CD8-positive, alpha-beta T cell (primary cell): ENCODE measurements at regions of chr2 and their contacts with region 1.

Region 1: DNA sequence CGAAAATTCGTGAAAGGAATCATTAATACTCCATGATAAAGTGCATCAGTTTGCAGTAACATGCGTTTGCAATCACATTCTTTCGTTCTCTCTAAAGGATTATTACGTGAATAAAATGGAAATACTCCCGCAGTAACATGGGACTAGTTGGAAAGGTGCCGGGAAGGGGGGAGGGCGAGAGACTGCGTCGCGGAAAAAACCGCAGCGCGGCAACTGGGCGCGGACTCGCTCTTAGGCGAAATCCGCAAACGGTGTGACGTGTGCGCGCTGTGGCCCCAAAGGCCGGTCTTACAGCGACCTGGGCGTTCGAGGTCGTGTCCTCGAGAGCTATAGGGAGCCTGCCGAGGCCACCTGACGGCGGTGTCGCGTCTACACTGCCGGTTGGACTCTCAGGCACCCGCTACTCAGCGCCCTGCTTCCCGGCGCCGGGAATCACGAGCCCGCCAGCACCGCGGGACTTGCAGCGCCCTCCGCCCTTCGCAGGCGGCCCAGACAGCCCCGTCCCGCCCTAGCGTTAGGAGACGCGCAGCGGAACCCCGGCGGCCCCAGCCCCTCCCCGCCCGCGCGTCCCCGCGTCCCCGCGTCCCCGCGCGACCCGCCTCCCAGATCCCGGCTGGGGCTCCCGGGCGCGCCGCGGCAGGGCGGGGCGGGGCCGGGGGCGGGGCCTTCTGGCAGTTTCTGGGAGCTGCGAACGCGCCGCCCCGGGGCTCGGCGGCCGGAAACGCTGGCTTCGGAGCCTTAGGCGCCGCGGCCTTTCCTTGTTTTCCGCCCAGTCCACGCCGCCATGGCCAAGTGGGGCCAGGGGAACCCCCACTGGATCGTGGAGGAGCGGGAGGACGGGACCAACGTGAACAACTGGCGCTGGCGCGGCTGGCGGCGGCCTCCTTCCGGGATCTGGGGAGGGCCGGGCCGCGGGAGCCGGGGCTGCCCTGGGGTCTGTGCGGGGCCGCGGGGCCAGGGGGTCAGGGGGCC is 15.1 kb downstream of the C2orf74 start:
- DNase-seq: peak; percentile 88 to 95 (median 94)
- ATAC-seq: peak; percentile 88
- H3K4me3 ChIP-seq: peak overlapping the region; percentile 74 to 87
- H3K4me3 Mint-ChIP-seq: peak overlapping the region; percentile 94
- H3K27ac ChIP-seq: peak overlapping the region; percentile 80 to 95
- H3K27ac Mint-ChIP-seq: peak overlapping the region; percentile 95
- H3K4me1 ChIP-seq: peaks cover 45% of the 10 kb centered on the region
- H3K4me1 Mint-ChIP-seq: peaks cover 52% of the 10 kb centered on the region
- H3K27me3 ChIP-seq: no peaks in the 10 kb centered on the region
- H3K27me3 Mint-ChIP-seq: no peaks in the 10 kb centered on the region
- CTCF ChIP-seq: no peak

Region 2: GRCh38 chr2:61016808-61017555 is 160.1 kb before region 1 on chr2:
- CTCF ChIA-PET with region 1: no interaction called
- POLR2A ChIA-PET with region 1: no interaction called
- intact Hi-C with region 1: loop called (anchors 1 kb)
- DNase-seq: peak; percentile 30 to 81 (median 67)
- ATAC-seq: peak; percentile 69
- H3K4me3 ChIP-seq: peak overlapping the region; percentile 80 to 99
- H3K4me3 Mint-ChIP-seq: peak overlapping the region; percentile 99
- H3K27ac ChIP-seq: peak overlapping the region; percentile 69 to 84
- H3K27ac Mint-ChIP-seq: peak overlapping the region; percentile 95
- H3K4me1 ChIP-seq: peaks cover 21% of the 10 kb centered on the region
- H3K4me1 Mint-ChIP-seq: peaks cover 46% of the 10 kb centered on the region
- H3K27me3 ChIP-seq: no peaks in the 10 kb centered on the region
- H3K27me3 Mint-ChIP-seq: no peaks in the 10 kb centered on the region
- CTCF ChIP-seq: no peak

Region 3: DNA sequence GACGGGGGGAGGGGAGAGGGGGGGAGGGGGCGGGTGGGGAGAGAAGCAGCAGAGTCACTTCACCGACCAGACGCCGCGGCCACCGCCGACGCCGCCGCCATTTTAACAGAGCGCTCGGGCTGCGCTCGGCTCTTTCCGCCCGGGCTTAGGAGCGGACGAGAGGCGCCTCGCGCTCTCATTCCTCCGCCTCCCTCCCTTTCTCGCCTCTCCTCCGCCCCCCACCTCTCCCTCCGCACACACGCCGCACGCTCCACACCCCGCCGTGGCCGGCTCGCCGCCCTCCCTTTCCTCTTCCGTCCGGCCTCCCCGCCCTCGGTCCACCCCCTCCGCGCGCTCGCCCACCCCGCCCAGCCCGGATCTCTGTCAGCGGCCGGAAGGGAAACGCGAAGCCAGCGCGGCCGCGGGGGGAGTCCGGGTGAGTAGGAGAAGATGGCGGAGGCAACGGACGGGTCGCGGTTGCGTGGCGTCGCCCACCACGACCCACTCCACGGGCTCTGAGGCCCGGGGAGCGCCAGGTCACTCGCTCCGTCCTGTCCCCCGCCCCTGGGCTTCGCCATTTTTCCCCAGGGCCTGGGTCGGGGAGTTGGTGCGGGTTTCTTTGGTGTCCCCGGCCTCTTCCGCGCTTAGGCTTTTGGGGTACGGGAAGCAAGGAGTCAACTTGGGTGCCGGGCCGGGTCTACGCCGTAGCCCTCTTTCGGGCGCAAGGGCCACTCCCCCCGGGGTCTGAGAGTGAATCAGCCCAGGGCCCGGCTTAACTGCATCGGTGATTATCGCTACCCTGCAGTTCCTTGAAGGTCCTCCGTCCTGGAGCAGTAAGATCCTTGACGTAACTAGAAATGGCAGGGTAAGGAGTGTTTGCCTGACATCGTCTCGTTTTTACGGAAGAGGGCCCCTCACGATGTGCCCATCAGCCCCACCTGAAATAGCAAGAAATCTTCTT is 294.2 kb after region 1 on chr2 and contains the start of gene USP34:
- CTCF ChIA-PET with region 1: no interaction called
- POLR2A ChIA-PET with region 1: no interaction called
- intact Hi-C with region 1: loop called (anchors 1 to 2 kb)
- DNase-seq: peak; percentile 90 to 98 (median 93)
- ATAC-seq: peak; percentile 85
- H3K4me3 ChIP-seq: peak within 1 kb of the TSS; percentile 77 to 99
- H3K4me3 Mint-ChIP-seq: peak within 1 kb of the TSS; percentile 92
- H3K27ac ChIP-seq: peak within 1 kb of the TSS; percentile 89 to 100
- H3K27ac Mint-ChIP-seq: peak within 1 kb of the TSS; percentile 98
- H3K4me1 ChIP-seq: peaks cover 35% of the 10 kb centered on the region
- H3K4me1 Mint-ChIP-seq: peaks cover 34% of the 10 kb centered on the region
- H3K27me3 ChIP-seq: no peaks in the 10 kb centered on the region
- H3K27me3 Mint-ChIP-seq: no peaks in the 10 kb centered on the region
- CTCF ChIP-seq: no peak
- total RNA-seq, gene USP34: 99.6 to 103 TPM

Region 4: GRCh38 chr2:61585383-61585782 is 408.3 kb after region 1 on chr2:
- CTCF ChIA-PET with region 1: no interaction called
- POLR2A ChIA-PET with region 1: no interaction called
- intact Hi-C with region 1: no loop called
- DNase-seq: no peak
- ATAC-seq: no peak
- H3K4me3 ChIP-seq: no peak overlapping the region
- H3K4me3 Mint-ChIP-seq: no peak overlapping the region
- H3K27ac ChIP-seq: no peak overlapping the region
- H3K27ac Mint-ChIP-seq: no peak overlapping the region
- H3K4me1 ChIP-seq: no peaks in the 10 kb centered on the region
- H3K4me1 Mint-ChIP-seq: peaks cover 4% of the 10 kb centered on the region
- H3K27me3 ChIP-seq: no peaks in the 10 kb centered on the region
- H3K27me3 Mint-ChIP-seq: no peaks in the 10 kb centered on the region
- CTCF ChIP-seq: no peak

Region 5: DNA sequence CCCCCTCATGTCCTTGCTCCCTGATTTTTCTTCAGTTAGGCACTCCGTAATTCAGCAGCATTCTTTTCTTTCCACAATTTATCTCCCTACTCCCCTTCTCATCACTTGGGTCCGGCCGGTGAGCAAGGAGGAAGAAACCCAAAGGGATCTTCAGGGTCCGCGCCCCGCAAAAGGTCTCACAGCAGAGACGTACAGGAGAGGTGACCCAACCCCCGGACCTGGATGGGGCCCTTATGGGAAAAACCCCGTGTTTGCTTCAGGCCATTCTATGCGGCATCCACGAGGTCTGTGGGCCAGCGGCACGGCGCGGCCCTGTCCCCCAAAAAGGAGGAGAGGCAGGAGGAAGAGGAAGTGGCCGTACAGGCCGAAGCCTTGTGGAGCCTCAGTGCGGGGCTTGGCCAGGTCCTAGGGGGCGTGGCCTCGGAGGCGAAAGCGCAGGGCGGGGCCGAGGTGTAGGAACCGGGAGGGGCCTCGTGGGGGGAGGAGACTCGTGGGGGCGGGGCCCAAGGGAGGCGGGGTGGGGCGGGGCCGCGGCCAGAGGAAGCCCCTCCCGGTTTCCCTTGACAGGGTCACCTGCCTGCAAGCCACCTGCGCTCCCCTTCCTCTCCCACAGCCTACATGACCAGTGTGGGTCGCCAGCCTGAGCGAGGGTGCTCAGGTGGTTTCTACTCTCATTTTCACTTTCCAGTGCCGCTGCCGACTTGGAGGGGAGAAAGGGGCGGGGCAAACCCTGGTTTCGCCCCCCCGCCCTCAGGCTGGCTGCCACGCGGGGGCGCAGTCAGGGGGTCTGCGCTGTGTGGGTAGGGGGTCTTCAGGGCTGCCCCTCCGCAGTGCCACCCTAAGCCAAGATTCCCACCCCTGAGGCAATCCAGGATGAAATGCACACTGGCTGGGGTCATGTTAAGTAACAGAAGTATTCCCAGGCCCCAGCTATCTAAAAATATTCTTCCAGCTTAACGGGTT is 517.6 kb after region 1 on chr2:
- CTCF ChIA-PET with region 1: no interaction called
- POLR2A ChIA-PET with region 1: no interaction called
- intact Hi-C with region 1: loop called (anchors 5 to 10 kb)
- DNase-seq: peak; percentile 65 to 89 (median 82)
- ATAC-seq: peak; percentile 95
- H3K4me3 ChIP-seq: peak overlapping the region; percentile 88 to 93
- H3K4me3 Mint-ChIP-seq: peak overlapping the region; percentile 90
- H3K27ac ChIP-seq: peak overlapping the region; percentile 43 to 63
- H3K27ac Mint-ChIP-seq: peak overlapping the region; percentile 87
- H3K4me1 ChIP-seq: peaks cover 14% of the 10 kb centered on the region
- H3K4me1 Mint-ChIP-seq: peaks cover 16% of the 10 kb centered on the region
- H3K27me3 ChIP-seq: no peaks in the 10 kb centered on the region
- H3K27me3 Mint-ChIP-seq: no peaks in the 10 kb centered on the region
- CTCF ChIP-seq: peak; percentile 52

Region 6: DNA sequence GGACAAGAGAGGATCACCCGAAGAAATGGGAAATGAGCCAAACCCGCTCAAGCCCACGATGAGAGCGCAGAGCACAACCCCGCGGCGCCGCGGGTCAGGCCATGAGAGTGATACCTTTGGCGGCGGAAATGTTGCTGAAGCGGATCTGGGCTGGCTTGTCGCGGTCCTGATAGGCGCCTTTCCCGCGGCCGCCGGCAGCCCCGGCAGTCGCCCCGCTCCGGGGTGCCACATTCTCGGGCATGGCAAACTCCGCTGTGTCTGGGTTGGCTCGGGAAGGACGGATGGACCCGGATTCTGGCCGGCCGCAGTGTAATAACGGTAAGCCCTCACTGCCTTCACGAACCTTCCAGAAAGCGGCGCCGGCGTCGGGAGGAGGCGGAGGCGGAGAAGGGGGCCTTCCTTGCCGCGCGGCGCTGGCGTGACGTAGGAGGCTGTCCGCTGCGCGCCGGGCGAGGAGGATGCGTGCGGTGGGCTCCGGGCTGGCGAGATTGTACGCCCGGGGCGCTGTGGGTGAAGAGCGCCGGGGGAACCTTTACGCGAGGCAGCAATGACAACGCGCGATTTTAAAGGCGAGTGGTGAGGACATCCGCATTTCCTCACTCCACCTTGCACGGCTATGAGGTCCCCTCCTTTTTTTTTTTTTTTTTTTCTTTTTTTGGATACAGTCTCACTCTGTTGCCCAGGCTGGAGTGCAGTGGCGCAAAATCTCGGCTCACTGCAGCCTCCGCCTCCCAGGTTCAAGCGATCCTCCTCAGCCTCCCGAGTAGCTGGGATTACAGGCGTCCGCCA is 711.4 kb after region 1 on chr2 and contains the start of gene CCT4:
- CTCF ChIA-PET with region 1: no interaction called
- POLR2A ChIA-PET with region 1: no interaction called
- intact Hi-C with region 1: loop called (anchors 1 to 5 kb)
- DNase-seq: peak; percentile 81 to 98 (median 92)
- ATAC-seq: peak; percentile 89
- H3K4me3 ChIP-seq: peak within 1 kb of the TSS; percentile 85 to 100
- H3K4me3 Mint-ChIP-seq: peak within 1 kb of the TSS; percentile 95
- H3K27ac ChIP-seq: peak within 1 kb of the TSS; percentile 99
- H3K27ac Mint-ChIP-seq: peak within 1 kb of the TSS; percentile 98
- H3K4me1 ChIP-seq: peaks cover 28% of the 10 kb centered on the region
- H3K4me1 Mint-ChIP-seq: peaks cover 33% of the 10 kb centered on the region
- H3K27me3 ChIP-seq: no peaks in the 10 kb centered on the region
- H3K27me3 Mint-ChIP-seq: no peaks in the 10 kb centered on the region
- CTCF ChIP-seq: no peak
- total RNA-seq, gene CCT4: 102 to 106 TPM